ENCODE measurements at regions of chr17 and their contacts with region 1.

Region 1: GRCh38 chr17:42964161-42964932 is at the start of gene AARSD1:
- DNase-seq: peak; percentile 95
- total RNA-seq, gene AARSD1: 27.0 TPM

Region 2: GRCh38 chr17:42980398-42981397 is 16.4 kb after region 1 on chr17 and contains the start of gene RUNDC1:
- intact Hi-C with region 1: loop called (anchors 2 kb)
- DNase-seq: peak; percentile 97
- total RNA-seq, gene RUNDC1: 14.8 TPM

Measured in cardiac septum (tissue), 1 donor.